Gastrocnemius medialis (tissue), 4 donors: ENCODE measurements at regions of chr10 and their contacts with region 1.

Region 1: GRCh38 chr10:102009801-102010425 is 46.1 kb downstream of the ARMH3 start:
- DNase-seq: peak; percentile 33 to 51
- ATAC-seq: peak; percentile 96 to 100
- H3K4me3 ChIP-seq: no peak overlapping the region
- H3K27ac ChIP-seq: no peak overlapping the region
- H3K4me1 ChIP-seq: no peaks in the 10 kb centered on the region
- H3K27me3 ChIP-seq: no peaks in the 10 kb centered on the region
- CTCF ChIP-seq: peak; percentile 79 to 97 (median 87)
- POLR2A ChIP-seq: no peak

Region 2: GRCh38 chr10:101602761-101603398 is 407.0 kb before region 1 on chr10:
- in situ Hi-C with region 1: loop called in 1 of 4 experiments (anchors 10 kb)
- intact Hi-C with region 1: no loop called
- DNase-seq: peak; percentile 18 to 61
- ATAC-seq: peak; percentile 84 to 85
- H3K4me3 ChIP-seq: no peak overlapping the region
- H3K27ac ChIP-seq: no peak overlapping the region
- H3K4me1 ChIP-seq: no peaks in the 10 kb centered on the region
- H3K27me3 ChIP-seq: no peaks in the 10 kb centered on the region
- CTCF ChIP-seq: peak; percentile 68 to 87 (median 80)
- POLR2A ChIP-seq: no peak

Region 3: GRCh38 chr10:101830322-101831168 is 179.4 kb before region 1 on chr10:
- in situ Hi-C with region 1: loop called in 2 of 4 experiments (anchors 5 to 10 kb)
- intact Hi-C with region 1: no loop called
- DNase-seq: peak; percentile 63 to 71
- ATAC-seq: peak; percentile 68 to 70
- H3K4me3 ChIP-seq: peak overlapping the region; percentile 40 to 67 (median 54)
- H3K27ac ChIP-seq: peak overlapping the region; percentile 8 to 44 (median 36)
- H3K4me1 ChIP-seq: peaks cover 15 to 19% of the 10 kb centered on the region in 2 donors
- H3K27me3 ChIP-seq: no peaks in the 10 kb centered on the region
- CTCF ChIP-seq: no peak
- POLR2A ChIP-seq: no peak

Region 4: GRCh38 chr10:101848894-101849351 is 161.0 kb before region 1 on chr10:
- in situ Hi-C with region 1: loop called in 1 of 4 experiments (anchors 5 kb)
- intact Hi-C with region 1: no loop called
- DNase-seq: no peak
- ATAC-seq: no peak
- H3K4me3 ChIP-seq: no peak overlapping the region
- H3K27ac ChIP-seq: no peak overlapping the region
- H3K4me1 ChIP-seq: peaks cover 6 to 7% of the 10 kb centered on the region in 2 donors
- H3K27me3 ChIP-seq: no peaks in the 10 kb centered on the region
- CTCF ChIP-seq: no peak
- POLR2A ChIP-seq: no peak

Region 5: GRCh38 chr10:101961591-101962498 is 48.1 kb before region 1 on chr10:
- in situ Hi-C with region 1: no loop called
- intact Hi-C with region 1: no loop called
- DNase-seq: peak; percentile 82 to 85
- ATAC-seq: peak; percentile 93 to 96
- H3K4me3 ChIP-seq: no peak overlapping the region
- H3K27ac ChIP-seq: peak overlapping the region; percentile 89 to 98 (median 93)
- H3K4me1 ChIP-seq: peaks cover 35 to 45% of the 10 kb centered on the region in 2 donors
- H3K27me3 ChIP-seq: no peaks in the 10 kb centered on the region
- CTCF ChIP-seq: peak in 1 of 5 experiments; percentile 20
- POLR2A ChIP-seq: no peak

Region 6: GRCh38 chr10:102024799-102025198 is 14.9 kb after region 1 on chr10:
- in situ Hi-C with region 1: no loop called
- intact Hi-C with region 1: loop called (anchors 1 kb)
- DNase-seq: no peak
- ATAC-seq: no peak
- H3K4me3 ChIP-seq: no peak overlapping the region
- H3K27ac ChIP-seq: no peak overlapping the region
- H3K4me1 ChIP-seq: no peaks in the 10 kb centered on the region
- H3K27me3 ChIP-seq: no peaks in the 10 kb centered on the region
- CTCF ChIP-seq: no peak
- POLR2A ChIP-seq: no peak